B cell (primary cell): ENCODE measurements at regions of chr17 and their contacts with region 1.

Region 1: DNA sequence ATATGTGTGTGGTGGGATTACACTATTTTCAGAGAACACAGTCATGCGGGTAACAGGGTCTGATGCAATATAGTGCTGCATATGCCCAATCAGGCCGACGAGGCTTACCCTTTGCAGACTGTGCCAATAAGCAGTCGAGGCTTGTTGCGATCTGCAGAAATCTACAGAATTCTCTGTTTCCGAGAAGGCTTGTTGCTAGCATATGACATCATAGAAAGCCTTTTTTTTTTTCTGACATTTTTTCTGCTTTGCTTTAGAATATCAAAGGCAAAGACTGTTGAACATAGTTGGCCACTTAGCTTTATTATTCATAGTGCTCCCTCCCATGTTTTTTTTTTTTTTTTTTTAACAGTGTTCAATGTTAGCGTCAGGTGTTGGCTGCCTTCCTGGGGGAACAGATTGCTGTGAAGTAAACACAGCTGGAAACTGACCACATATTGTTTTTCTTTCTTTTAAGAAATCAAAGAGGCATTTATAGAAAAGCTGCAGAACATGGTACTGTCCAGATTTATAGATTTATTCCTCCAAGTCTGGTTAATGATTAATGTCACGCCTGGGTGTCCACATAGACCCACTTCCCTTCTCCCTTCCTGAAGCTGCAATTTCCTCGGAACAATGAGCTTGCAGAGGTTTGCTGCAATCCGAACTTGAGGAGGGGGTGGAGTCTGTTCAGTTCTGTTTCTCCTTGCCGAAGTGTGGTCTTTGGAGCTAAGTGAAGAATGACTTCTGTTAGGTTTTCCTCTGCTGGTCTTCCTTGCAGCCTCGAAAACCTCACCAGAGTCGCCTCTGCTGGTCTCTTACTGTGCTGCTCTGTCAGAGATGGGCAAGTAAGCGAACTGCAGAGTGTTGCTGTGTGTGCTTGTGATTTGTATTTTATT is 87.3 kb downstream of the MAP2K6 start:
- DNase-seq: no peak
- ATAC-seq: peak; percentile 23
- H3K4me3 ChIP-seq: peak overlapping the region in 1 of 5 experiments; percentile 70
- H3K4me3 Mint-ChIP-seq: peak overlapping the region; percentile 57
- H3K27ac ChIP-seq: no peak overlapping the region
- H3K27ac Mint-ChIP-seq: peak overlapping the region; percentile 28
- H3K4me1 ChIP-seq: peaks cover 41 to 44% of the 10 kb centered on the region in 2 donors
- H3K4me1 Mint-ChIP-seq: peaks cover 63% of the 10 kb centered on the region
- H3K27me3 ChIP-seq: no peaks in the 10 kb centered on the region
- H3K27me3 Mint-ChIP-seq: no peaks in the 10 kb centered on the region
- CTCF ChIP-seq: no peak

Region 2: DNA sequence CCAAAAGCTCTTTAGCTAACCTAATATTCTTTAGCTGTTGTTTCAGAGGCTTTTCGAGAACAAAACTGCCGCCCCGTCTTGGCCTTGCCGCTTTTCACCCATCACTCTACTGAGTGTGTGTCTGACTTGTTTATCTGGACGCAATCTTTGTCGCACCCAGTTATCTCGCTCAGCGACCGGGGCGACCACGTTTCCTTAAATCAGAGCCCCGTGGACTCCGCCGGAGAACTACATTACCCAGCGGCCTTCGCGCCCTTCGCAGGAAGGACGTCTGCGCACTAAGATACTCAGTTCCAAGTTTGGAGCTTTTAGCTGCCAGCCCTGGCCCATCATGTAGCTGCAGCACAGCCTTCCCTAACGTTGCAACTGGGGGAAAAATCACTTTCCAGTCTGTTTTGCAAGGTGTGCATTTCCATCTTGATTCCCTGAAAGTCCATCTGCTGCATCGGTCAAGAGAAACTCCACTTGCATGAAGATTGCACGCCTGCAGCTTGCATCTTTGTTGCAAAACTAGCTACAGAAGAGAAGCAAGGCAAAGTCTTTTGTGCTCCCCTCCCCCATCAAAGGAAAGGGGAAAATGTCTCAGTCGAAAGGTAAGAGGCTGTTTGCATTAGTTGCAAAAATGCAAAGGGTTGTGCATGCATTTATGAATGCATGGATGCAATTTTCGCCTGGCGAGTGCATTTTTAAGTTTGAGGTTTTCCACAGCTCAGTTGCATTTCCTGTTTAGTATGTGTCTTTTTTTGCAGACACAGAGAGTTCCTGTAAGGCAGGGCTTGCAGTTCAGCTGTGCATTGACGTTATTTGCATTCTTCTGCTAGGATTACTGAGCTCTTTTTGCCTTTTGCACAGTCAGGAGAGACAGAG is 87.2 kb before region 1 on chr17 and contains the start of gene MAP2K6:
- CTCF ChIA-PET with region 1: interaction called, 3 read pairs
- POLR2A ChIA-PET with region 1: no interaction called
- intact Hi-C with region 1: loop called (anchors 5 kb)
- DNase-seq: peak; percentile 83
- ATAC-seq: peak; percentile 99
- H3K4me3 ChIP-seq: peak within 1 kb of the TSS; percentile 56 to 90 (median 73)
- H3K4me3 Mint-ChIP-seq: no peak within 1 kb of the TSS
- H3K27ac ChIP-seq: no peak within 1 kb of the TSS
- H3K27ac Mint-ChIP-seq: no peak within 1 kb of the TSS
- H3K4me1 ChIP-seq: peaks cover 14 to 18% of the 10 kb centered on the region in 2 donors
- H3K4me1 Mint-ChIP-seq: no peaks in the 10 kb centered on the region
- H3K27me3 ChIP-seq: no peaks in the 10 kb centered on the region
- H3K27me3 Mint-ChIP-seq: no peaks in the 10 kb centered on the region
- CTCF ChIP-seq: no peak
- total RNA-seq, gene MAP2K6: 7.7 TPM in 2 replicates